Esophagus muscularis mucosa (tissue), 4 donors: ENCODE measurements at regions of chr2 and their contacts with region 1.

Region 1: DNA sequence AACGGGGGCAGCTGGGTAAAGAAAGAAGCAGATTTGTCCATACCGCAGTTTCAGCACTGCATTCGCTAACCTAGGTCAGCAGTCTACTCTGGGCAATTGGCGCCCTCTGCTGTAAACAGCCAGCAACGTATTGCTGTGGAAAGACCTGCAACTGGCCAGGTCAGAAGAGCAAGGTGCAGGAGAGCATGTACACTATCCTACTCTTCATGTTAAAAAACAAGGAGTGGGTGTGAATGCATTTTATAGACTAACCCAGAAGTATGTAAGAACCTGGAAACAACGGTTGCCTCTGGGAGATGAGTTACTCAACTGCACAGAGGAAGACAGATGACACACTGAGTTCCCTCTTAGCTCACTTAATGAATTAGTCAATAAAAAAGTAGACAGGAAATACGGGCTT is 6.2 kb downstream of the MRPS5 start:
- DNase-seq: no peak
- H3K4me3 ChIP-seq: no peak overlapping the region
- H3K27ac ChIP-seq: no peak overlapping the region
- H3K4me1 ChIP-seq: peaks cover 17 to 39% (median 34%) of the 10 kb centered on the region in 4 donors
- H3K27me3 ChIP-seq: no peaks in the 10 kb centered on the region
- CTCF ChIP-seq: peak; percentile 65 to 83 (median 68)
- EP300 ChIP-seq: no peak
- POLR2A ChIP-seq: no peak

Region 2: DNA sequence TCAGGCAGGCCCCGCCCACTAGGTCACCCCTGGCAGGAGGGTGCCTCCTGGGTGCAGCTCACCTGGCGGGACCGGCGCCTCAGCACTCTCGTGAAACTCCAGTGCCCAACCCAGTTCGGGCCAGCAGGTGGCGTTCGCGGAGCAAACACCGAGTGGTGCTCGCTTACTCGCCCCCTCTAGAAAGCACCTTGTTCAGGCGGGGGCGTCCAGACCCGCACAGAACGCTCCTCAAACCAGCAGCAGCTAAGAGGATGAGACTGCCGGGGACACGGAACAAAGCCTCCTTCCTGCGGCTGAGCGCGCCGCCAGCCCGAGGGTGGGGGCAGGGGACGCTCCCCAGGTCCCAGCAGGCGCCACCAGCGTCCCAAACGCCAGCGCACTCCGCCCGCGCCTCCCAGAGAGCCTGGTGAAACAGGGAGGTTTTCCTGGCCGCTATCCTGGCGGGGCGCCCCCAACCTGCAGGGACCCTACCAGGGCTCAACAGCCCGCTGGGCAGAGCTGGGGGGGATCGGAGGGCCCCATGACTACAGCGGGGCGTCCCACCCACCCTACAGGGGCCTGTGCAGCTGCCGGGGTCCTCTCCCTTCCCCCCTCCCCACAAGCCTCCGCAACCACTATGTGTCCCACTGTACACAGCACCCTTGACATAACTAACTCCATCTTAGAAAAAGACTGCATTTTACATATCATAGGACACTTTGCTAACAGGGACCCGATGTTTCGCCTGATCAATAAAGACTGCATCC is 38.5 kb before region 1 on chr2:
- intact Hi-C with region 1: loop called (anchors 5 kb)
- DNase-seq: peak; percentile 93
- H3K4me3 ChIP-seq: peak overlapping the region; percentile 41 to 55 (median 50)
- H3K27ac ChIP-seq: no peak overlapping the region
- H3K4me1 ChIP-seq: peaks cover 9 to 14% (median 11%) of the 10 kb centered on the region in 4 donors
- H3K27me3 ChIP-seq: peaks cover 0 to 74% (median 8%) of the 10 kb centered on the region in 4 donors
- CTCF ChIP-seq: peak; percentile 51 to 82 (median 69)
- EP300 ChIP-seq: no peak
- POLR2A ChIP-seq: no peak